CD4-positive, alpha-beta memory T cell (primary cell): ENCODE measurements at regions of chr1 and their contacts with region 1.

Region 1: GRCh38 chr1:247390116-247390791 is 25.7 kb upstream of the NLRP3 start:
- DNase-seq: peak; percentile 84 to 89 (median 86)
- H3K4me3 ChIP-seq: peak overlapping the region in 1 of 2 donors; percentile 34
- H3K4me3 Mint-ChIP-seq: peak overlapping the region; percentile 71 to 88 (median 77)
- H3K27ac ChIP-seq: peak overlapping the region; percentile 36
- H3K27ac Mint-ChIP-seq: peak overlapping the region; percentile 59 to 93 (median 90)
- H3K4me1 ChIP-seq: peaks cover 17% of the 10 kb centered on the region
- H3K4me1 Mint-ChIP-seq: peaks cover 7 to 14% (median 8%) of the 10 kb centered on the region in 4 donors
- H3K27me3 ChIP-seq: no peaks in the 10 kb centered on the region
- H3K27me3 Mint-ChIP-seq: no peaks in the 10 kb centered on the region

Region 2: GRCh38 chr1:247373721-247374141 is 16.5 kb before region 1 on chr1:
- CTCF ChIA-PET with region 1: interaction called, 133 read pairs
- POLR2A ChIA-PET with region 1: interaction called, 12 read pairs
- intact Hi-C with region 1: loop called (anchors 1 kb)
- DNase-seq: peak; percentile 45 to 55 (median 47)
- H3K4me3 ChIP-seq: no peak overlapping the region
- H3K4me3 Mint-ChIP-seq: peak overlapping the region in 5 of 8 donors; percentile 6 to 74 (median 66)
- H3K27ac ChIP-seq: no peak overlapping the region
- H3K27ac Mint-ChIP-seq: peak overlapping the region in 1 of 7 donors; percentile 22
- H3K4me1 ChIP-seq: no peaks in the 10 kb centered on the region
- H3K4me1 Mint-ChIP-seq: peaks cover 2 to 9% (median 5%) of the 10 kb centered on the region in 4 donors
- H3K27me3 ChIP-seq: no peaks in the 10 kb centered on the region
- H3K27me3 Mint-ChIP-seq: peaks cover 3 to 5% of the 10 kb centered on the region in 2 donors

Region 3: GRCh38 chr1:247407180-247407616 is 16.9 kb after region 1 on chr1:
- CTCF ChIA-PET with region 1: interaction called, 104 read pairs
- POLR2A ChIA-PET with region 1: interaction called, 16 read pairs
- intact Hi-C with region 1: loop called (anchors 1 kb)
- DNase-seq: peak; percentile 73 to 90 (median 78)
- H3K4me3 ChIP-seq: peak overlapping the region; percentile 54 to 57
- H3K4me3 Mint-ChIP-seq: peak overlapping the region; percentile 82 to 95 (median 88)
- H3K27ac ChIP-seq: peak overlapping the region; percentile 65
- H3K27ac Mint-ChIP-seq: peak overlapping the region; percentile 83 to 98 (median 95)
- H3K4me1 ChIP-seq: peaks cover 45% of the 10 kb centered on the region
- H3K4me1 Mint-ChIP-seq: peaks cover 29 to 46% (median 39%) of the 10 kb centered on the region in 4 donors
- H3K27me3 ChIP-seq: no peaks in the 10 kb centered on the region
- H3K27me3 Mint-ChIP-seq: no peaks in the 10 kb centered on the region

Region 4: GRCh38 chr1:247421074-247421473 is 30.8 kb after region 1 on chr1:
- CTCF ChIA-PET with region 1: interaction called, 104 read pairs
- POLR2A ChIA-PET with region 1: interaction called, 50 read pairs
- intact Hi-C with region 1: loop called (anchors 1 kb)
- DNase-seq: no peak
- H3K4me3 ChIP-seq: no peak overlapping the region
- H3K4me3 Mint-ChIP-seq: peak overlapping the region; percentile 37 to 71 (median 65)
- H3K27ac ChIP-seq: no peak overlapping the region
- H3K27ac Mint-ChIP-seq: peak overlapping the region in 5 of 7 donors; percentile 0 to 77 (median 18)
- H3K4me1 ChIP-seq: peaks cover 51% of the 10 kb centered on the region
- H3K4me1 Mint-ChIP-seq: peaks cover 47 to 81% (median 63%) of the 10 kb centered on the region in 4 donors
- H3K27me3 ChIP-seq: no peaks in the 10 kb centered on the region
- H3K27me3 Mint-ChIP-seq: no peaks in the 10 kb centered on the region

Region 5: DNA sequence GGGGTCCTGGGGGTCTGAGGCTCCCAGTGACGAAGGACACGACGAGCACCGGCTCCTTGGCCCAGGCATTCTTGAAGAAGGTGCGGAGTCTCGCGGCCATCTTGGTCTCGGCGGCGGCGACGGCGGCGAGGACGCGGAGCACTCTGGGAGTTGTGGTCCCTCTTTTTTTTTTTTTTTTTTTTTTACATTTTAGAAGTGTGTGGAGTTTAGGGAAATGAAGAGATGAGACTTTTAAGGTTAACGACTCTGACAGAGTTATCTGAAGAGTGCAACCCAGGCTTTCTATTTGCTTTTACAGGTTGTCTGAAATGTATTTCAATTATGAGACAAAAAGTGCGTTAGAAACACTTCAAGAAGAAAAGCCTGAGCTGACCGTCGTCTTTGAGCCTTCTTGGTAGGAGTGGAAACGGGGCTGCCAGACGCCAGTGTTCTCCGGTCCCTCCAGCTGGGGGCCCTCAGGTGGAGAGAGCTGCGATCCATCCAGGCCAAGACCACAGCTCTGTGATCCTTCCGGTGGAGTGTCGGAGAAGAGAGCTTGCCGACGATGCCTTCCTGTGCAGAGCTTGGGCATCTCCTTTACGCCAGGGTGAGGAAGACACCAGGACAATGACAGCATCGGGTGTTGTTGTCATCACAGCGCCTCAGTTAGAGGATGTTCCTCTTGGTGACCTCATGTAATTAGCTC is 58.0 kb after region 1 on chr1:
- CTCF ChIA-PET with region 1: interaction called, 19 read pairs
- POLR2A ChIA-PET with region 1: interaction called, 3 read pairs
- intact Hi-C with region 1: no loop called
- DNase-seq: peak in 3 of 5 donors; percentile 11 to 19 (median 15)
- H3K4me3 ChIP-seq: no peak overlapping the region
- H3K4me3 Mint-ChIP-seq: peak overlapping the region in 6 of 8 donors; percentile 20 to 73 (median 44)
- H3K27ac ChIP-seq: no peak overlapping the region
- H3K27ac Mint-ChIP-seq: peak overlapping the region in 2 of 7 donors; percentile 53 to 61
- H3K4me1 ChIP-seq: no peaks in the 10 kb centered on the region
- H3K4me1 Mint-ChIP-seq: peaks cover 0 to 4% (median under 1%) of the 10 kb centered on the region in 4 donors
- H3K27me3 ChIP-seq: no peaks in the 10 kb centered on the region
- H3K27me3 Mint-ChIP-seq: no peaks in the 10 kb centered on the region

Region 6: DNA sequence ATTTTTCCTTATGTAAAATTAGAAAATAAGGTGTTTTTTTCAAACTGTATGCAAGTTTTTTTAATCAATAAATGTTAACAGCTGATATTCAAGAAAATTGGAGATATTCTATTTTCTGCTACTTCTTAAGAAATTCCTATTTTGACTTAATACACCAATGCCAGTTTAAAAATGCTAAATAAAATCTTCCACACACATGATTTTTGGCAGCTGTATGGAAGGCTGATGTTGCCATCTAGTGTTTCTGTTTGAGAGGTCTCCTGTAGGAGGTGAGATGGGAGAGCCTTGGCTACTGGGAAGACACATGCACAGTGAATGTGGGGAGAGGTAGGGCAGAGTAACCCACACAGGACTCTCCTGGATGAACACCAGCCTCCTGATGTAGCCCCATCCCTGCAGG is 96.8 kb after region 1 on chr1:
- CTCF ChIA-PET with region 1: interaction called, 230 read pairs
- POLR2A ChIA-PET with region 1: interaction called, 16 read pairs
- intact Hi-C with region 1: loop called (anchors 1 kb)
- DNase-seq: peak in 4 of 5 donors; percentile 47 to 56 (median 54)
- H3K4me3 ChIP-seq: no peak overlapping the region
- H3K4me3 Mint-ChIP-seq: no peak overlapping the region
- H3K27ac ChIP-seq: no peak overlapping the region
- H3K27ac Mint-ChIP-seq: no peak overlapping the region
- H3K4me1 ChIP-seq: no peaks in the 10 kb centered on the region
- H3K4me1 Mint-ChIP-seq: no peaks in the 10 kb centered on the region
- H3K27me3 ChIP-seq: no peaks in the 10 kb centered on the region
- H3K27me3 Mint-ChIP-seq: peaks cover 7 to 10% of the 10 kb centered on the region in 2 donors